ENCODE measurements at regions of chr3 and their contacts with region 1.

Region 1: DNA sequence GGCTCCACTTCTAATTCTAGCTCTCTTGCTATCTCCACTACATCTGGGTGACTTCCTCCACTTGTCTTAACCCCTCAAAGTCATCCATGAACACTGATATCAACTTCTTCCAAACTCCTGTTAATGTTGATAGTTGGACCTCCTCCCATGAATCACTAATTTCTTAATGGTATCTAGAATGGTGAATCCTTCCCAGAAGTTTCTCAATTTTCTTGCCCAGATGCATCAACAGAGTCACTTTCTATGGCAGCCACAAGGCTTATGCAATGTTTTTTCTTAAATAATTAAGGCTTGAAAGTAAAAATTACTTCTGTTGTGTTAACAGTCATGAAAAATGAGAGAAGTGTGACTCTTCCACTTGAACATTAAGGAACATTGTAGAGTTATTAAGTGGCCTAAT is 164.3 kb downstream of the PCCB start:
- DNase-seq: no peak
- ATAC-seq: no peak
- H3K4me3 Mint-ChIP-seq: no peak overlapping the region
- H3K27ac Mint-ChIP-seq: no peak overlapping the region
- H3K4me1 Mint-ChIP-seq: no peaks in the 10 kb centered on the region
- H3K27me3 Mint-ChIP-seq: no peaks in the 10 kb centered on the region
- CTCF ChIP-seq: no peak

Region 2: GRCh38 chr3:134511500-134511899 is 1903.0 kb before region 1 on chr3:
- CTCF ChIA-PET with region 1: no interaction called
- POLR2A ChIA-PET with region 1: interaction called, 10 read pairs
- intact Hi-C with region 1: no loop called
- DNase-seq: no peak
- ATAC-seq: peak; percentile 14
- H3K4me3 Mint-ChIP-seq: no peak overlapping the region
- H3K27ac Mint-ChIP-seq: peak overlapping the region; percentile 6
- H3K4me1 Mint-ChIP-seq: peaks cover 11% of the 10 kb centered on the region
- H3K27me3 Mint-ChIP-seq: no peaks in the 10 kb centered on the region
- CTCF ChIP-seq: no peak

Region 3: GRCh38 chr3:136366289-136366688 is 48.2 kb before region 1 on chr3:
- CTCF ChIA-PET with region 1: no interaction called
- POLR2A ChIA-PET with region 1: no interaction called
- intact Hi-C with region 1: no loop called
- DNase-seq: no peak
- ATAC-seq: no peak
- H3K4me3 Mint-ChIP-seq: no peak overlapping the region
- H3K27ac Mint-ChIP-seq: no peak overlapping the region
- H3K4me1 Mint-ChIP-seq: no peaks in the 10 kb centered on the region
- H3K27me3 Mint-ChIP-seq: no peaks in the 10 kb centered on the region
- CTCF ChIP-seq: no peak